Heart left ventricle (tissue), 16 donors: ENCODE measurements at regions of chr12 and their contacts with region 1.

Region 1: DNA sequence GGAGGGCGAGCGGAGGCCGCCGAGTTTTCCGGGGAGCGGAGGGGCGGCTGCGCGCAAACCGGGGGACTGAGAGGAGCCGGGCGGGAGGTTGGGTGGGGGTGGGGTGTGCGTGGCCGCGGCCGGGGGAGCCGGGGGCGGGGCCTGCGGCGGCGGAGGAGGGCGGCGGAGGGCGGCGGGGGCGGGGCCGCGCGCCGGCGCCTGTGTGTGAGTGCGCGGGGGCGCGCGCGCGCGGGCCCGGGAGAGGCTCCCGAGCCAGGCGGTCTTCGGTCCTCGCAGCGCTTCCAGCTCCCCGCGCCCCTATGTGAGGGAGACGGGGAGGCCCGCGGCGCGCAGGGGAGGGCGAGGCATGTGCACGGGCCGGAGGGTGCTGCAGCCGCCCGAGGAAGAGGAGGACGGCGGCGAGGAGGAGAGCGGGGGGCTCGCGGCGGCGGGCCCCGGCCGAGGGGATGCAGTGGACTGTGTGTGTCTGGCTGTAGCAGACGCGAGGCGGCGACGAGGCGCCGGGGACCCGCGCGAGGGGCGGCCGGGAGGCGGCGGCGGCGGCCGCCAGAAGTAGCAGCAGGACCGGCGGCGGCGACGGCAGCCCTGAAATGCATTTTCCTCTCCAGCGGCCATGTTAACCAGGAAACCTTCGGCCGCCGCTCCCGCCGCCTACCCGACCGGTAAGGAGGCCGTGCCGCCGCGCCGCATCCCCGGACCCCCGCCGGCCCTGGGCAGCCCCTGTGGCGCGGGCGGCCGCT is at the start of gene DYRK2:
- DNase-seq: peak; percentile 83 to 92 (median 87)
- ATAC-seq: peak; percentile 40 to 82 (median 68)
- H3K4me3 ChIP-seq: peak within 1 kb of the TSS; percentile 74 to 99 (median 96)
- H3K27ac ChIP-seq: peak within 1 kb of the TSS; percentile 93 to 99 (median 98)
- H3K4me1 ChIP-seq: peaks cover 8 to 44% (median 29%) of the 10 kb centered on the region in 12 donors
- H3K27me3 ChIP-seq: no peaks in the 10 kb centered on the region
- CTCF ChIP-seq: peak in 6 of 12 donors; percentile 21 to 43 (median 27)
- POLR2A ChIP-seq: peak in 1 of 2 donors; percentile 93
- total RNA-seq, gene DYRK2: 30.5 to 62.9 (median 37.9) TPM

Region 2: DNA sequence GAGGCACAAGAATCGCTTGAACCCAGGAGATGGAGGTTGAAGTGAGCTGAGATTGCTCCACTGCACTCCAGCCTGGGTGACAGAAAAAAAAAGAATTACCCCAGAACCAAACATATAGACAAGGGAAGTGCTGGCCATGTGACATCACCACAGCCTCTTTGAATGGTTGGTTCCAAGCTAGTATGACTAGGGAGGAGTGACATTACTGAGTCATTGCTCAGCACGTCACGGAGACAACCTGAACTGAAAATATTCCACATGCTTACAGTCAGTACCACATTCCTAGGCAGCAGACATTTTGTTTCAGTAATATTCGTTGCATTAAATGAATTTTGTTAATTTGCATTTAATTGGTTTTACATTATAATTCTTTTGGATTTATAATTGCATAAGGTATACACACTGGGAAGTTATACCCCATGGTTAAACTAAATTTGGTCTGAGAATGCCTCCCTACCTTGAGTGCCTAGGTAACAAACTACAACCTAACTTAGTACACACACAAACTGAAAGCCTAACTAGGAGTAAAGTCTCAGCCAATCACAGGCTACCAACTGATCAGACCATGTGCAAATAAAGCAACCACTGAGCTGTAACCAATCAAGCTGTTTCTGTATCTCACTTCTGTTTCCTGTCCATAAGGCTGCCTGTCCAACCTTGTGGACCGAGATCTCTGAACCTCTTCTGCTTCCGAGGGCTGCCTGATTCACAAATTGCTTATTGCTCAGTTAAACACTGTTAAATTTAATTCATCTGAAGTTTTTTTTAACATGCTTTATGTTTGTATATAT is 215.1 kb before region 1 on chr12:
- intact Hi-C with region 1: loop called in 3 of 10 experiments (anchors 5 to 10 kb)
- DNase-seq: no peak
- ATAC-seq: no peak
- H3K4me3 ChIP-seq: no peak overlapping the region
- H3K27ac ChIP-seq: peak overlapping the region in 8 of 12 donors; percentile 30 to 80 (median 70)
- H3K4me1 ChIP-seq: peaks cover 0 to 36% (median 24%) of the 10 kb centered on the region in 12 donors
- H3K27me3 ChIP-seq: no peaks in the 10 kb centered on the region
- CTCF ChIP-seq: no peak
- POLR2A ChIP-seq: no peak

Region 3: DNA sequence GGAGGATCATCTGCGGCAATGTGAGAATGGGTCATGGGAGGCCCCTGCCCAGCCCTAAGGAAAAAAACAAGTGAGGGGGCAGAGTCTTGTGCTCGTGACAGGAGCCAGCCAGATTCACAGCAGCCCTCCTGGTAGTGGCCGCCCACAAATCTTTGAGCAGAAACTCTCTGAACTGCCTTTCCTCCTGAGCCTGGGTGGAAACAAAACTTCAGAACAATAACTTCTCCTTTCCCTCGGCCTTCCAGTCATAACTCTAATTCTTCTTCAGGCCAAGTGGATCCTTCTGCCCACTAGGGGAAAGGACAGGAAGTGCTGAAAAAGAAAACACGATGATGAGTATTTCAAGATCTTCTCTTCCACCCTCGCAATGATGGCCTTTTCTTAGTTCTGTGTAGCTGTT is 190.9 kb before region 1 on chr12:
- intact Hi-C with region 1: loop called in 1 of 10 experiments (anchors 5 kb)
- DNase-seq: peak in 2 of 5 donors; percentile 15 to 28
- ATAC-seq: peak in 3 of 4 donors; percentile 51 to 64 (median 58)
- H3K4me3 ChIP-seq: peak overlapping the region in 1 of 12 donors; percentile 8
- H3K27ac ChIP-seq: peak overlapping the region; percentile 6 to 68 (median 46)
- H3K4me1 ChIP-seq: peaks cover 0 to 27% (median 23%) of the 10 kb centered on the region in 12 donors
- H3K27me3 ChIP-seq: no peaks in the 10 kb centered on the region
- CTCF ChIP-seq: peak in 11 of 12 donors; percentile 12 to 53 (median 26)
- POLR2A ChIP-seq: no peak

Region 4: DNA sequence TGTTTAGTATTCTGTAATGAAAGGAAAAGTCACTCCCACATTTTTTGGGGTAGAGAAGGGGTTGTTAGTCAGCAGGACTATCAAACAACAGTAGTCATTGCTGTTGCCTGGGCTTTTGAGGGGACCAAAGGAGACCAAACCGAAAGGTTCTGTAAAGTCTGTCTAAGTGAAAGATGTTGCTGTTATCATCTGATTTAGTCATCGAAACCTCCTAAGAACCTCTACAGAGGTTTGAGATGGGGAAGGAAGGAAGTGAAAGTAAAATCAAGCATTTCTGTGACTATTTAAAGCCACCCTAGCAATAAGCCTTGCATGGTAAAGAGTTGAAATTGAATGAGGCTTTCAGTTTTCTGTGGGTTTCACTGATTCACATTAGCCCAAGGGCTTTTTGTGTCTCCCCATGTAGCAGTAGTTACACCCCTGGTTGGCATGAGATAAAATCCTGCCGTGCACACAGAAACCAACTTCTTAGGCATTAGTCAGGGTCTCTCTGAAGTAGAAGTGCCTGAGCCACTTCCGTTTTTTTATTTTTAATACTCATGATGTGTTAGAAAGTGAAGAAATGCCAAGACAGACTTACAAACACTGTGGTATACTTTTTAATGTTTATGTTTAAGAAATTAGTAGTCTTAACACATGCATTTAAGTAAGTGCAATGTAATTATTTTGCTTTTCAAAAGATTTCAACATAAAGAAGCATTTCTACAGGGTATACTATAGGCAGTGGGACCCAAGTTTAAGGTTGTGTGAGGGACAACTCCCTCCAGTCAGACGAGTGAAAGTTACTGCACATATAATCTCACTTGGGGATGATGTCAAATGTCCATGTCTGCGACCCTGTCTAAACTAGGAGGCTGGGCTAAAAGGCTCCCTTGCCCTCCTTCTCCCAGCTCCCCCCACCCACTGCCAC is 50.2 kb after region 1 on chr12:
- intact Hi-C with region 1: no loop called
- DNase-seq: no peak
- ATAC-seq: peak in 3 of 4 donors; percentile 40 to 54 (median 49)
- H3K4me3 ChIP-seq: peak overlapping the region in 10 of 12 donors; percentile 3 to 54 (median 38)
- H3K27ac ChIP-seq: peak overlapping the region in 7 of 12 donors; percentile 2 to 77 (median 21)
- H3K4me1 ChIP-seq: peaks cover 0 to 26% (median 12%) of the 10 kb centered on the region in 12 donors
- H3K27me3 ChIP-seq: no peaks in the 10 kb centered on the region
- CTCF ChIP-seq: no peak
- POLR2A ChIP-seq: no peak

Region 5: GRCh38 chr12:67758119-67758518 is 109.4 kb after region 1 on chr12:
- intact Hi-C with region 1: loop called in 1 of 10 experiments (anchors 10 kb)
- DNase-seq: no peak
- ATAC-seq: no peak
- H3K4me3 ChIP-seq: no peak overlapping the region
- H3K27ac ChIP-seq: peak overlapping the region in 1 of 12 donors; percentile 10
- H3K4me1 ChIP-seq: peaks cover 0 to 38% (median 5%) of the 10 kb centered on the region in 12 donors
- H3K27me3 ChIP-seq: no peaks in the 10 kb centered on the region
- CTCF ChIP-seq: no peak
- POLR2A ChIP-seq: no peak

Region 6: DNA sequence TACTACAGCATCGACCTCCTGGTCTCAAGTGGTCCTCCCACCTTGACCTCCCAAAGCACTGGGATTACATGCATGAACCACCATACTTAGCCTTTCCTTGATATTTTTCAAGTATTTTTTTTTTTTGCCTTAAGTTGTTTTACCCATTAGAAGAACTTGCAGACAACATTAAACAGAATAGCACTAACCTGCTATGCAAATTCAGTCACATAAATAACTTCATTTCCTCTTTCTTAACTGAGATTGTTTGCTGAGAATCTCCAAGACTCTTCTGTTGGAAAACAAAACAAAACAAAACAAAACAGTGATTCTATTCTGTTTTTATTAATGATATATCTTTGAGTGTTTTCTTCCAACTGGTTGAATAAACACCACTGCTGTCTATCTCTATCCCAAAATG is 224.7 kb after region 1 on chr12:
- intact Hi-C with region 1: no loop called
- DNase-seq: no peak
- ATAC-seq: no peak
- H3K4me3 ChIP-seq: no peak overlapping the region
- H3K27ac ChIP-seq: no peak overlapping the region
- H3K4me1 ChIP-seq: no peaks in the 10 kb centered on the region
- H3K27me3 ChIP-seq: no peaks in the 10 kb centered on the region
- CTCF ChIP-seq: no peak
- POLR2A ChIP-seq: no peak

Region 7: GRCh38 chr12:67937836-67938235 is 289.1 kb after region 1 on chr12:
- intact Hi-C with region 1: loop called (anchors 2 to 5 kb)
- DNase-seq: no peak
- ATAC-seq: no peak
- H3K4me3 ChIP-seq: no peak overlapping the region
- H3K27ac ChIP-seq: no peak overlapping the region
- H3K4me1 ChIP-seq: peaks cover 0 to 21% (median 3%) of the 10 kb centered on the region in 12 donors
- H3K27me3 ChIP-seq: no peaks in the 10 kb centered on the region
- CTCF ChIP-seq: no peak
- POLR2A ChIP-seq: no peak

Region 8: GRCh38 chr12:68200854-68201253 is 552.2 kb after region 1 on chr12:
- intact Hi-C with region 1: no loop called
- DNase-seq: no peak
- ATAC-seq: no peak
- H3K4me3 ChIP-seq: no peak overlapping the region
- H3K27ac ChIP-seq: no peak overlapping the region
- H3K4me1 ChIP-seq: no peaks in the 10 kb centered on the region
- H3K27me3 ChIP-seq: peaks cover 0 to 6% (median 0%) of the 10 kb centered on the region in 9 donors
- CTCF ChIP-seq: no peak
- POLR2A ChIP-seq: no peak